ENCODE measurements at regions of chr12 and their contacts with region 1.

Region 1: GRCh38 chr12:55829967-55830600 is 697 bp upstream of the DNAJC14 start:
- DNase-seq: peak; percentile 13
- H3K4me3 Mint-ChIP-seq: peak overlapping the region; percentile 97
- H3K27ac Mint-ChIP-seq: peak overlapping the region; percentile 92
- H3K4me1 Mint-ChIP-seq: peaks cover 28% of the 10 kb centered on the region
- H3K27me3 Mint-ChIP-seq: no peaks in the 10 kb centered on the region
- CTCF ChIP-seq: no peak

Region 2: GRCh38 chr12:55847603-55848291 is 17.7 kb after region 1 on chr12:
- CTCF ChIA-PET with region 1: interaction called, 5 read pairs
- POLR2A ChIA-PET with region 1: interaction called, 12 read pairs
- intact Hi-C with region 1: loop called (anchors 1 kb)
- DNase-seq: peak; percentile 97
- H3K4me3 Mint-ChIP-seq: peak overlapping the region; percentile 52
- H3K27ac Mint-ChIP-seq: peak overlapping the region; percentile 99
- H3K4me1 Mint-ChIP-seq: peaks cover 20% of the 10 kb centered on the region
- H3K27me3 Mint-ChIP-seq: no peaks in the 10 kb centered on the region
- CTCF ChIP-seq: no peak

Region 3: GRCh38 chr12:55875704-55876467 is 45.8 kb after region 1 on chr12:
- CTCF ChIA-PET with region 1: no interaction called
- POLR2A ChIA-PET with region 1: interaction called, 12 read pairs
- intact Hi-C with region 1: no loop called
- DNase-seq: no peak
- H3K4me3 Mint-ChIP-seq: no peak overlapping the region
- H3K27ac Mint-ChIP-seq: no peak overlapping the region
- H3K4me1 Mint-ChIP-seq: peaks cover 5% of the 10 kb centered on the region
- H3K27me3 Mint-ChIP-seq: no peaks in the 10 kb centered on the region
- CTCF ChIP-seq: no peak

Region 4: DNA sequence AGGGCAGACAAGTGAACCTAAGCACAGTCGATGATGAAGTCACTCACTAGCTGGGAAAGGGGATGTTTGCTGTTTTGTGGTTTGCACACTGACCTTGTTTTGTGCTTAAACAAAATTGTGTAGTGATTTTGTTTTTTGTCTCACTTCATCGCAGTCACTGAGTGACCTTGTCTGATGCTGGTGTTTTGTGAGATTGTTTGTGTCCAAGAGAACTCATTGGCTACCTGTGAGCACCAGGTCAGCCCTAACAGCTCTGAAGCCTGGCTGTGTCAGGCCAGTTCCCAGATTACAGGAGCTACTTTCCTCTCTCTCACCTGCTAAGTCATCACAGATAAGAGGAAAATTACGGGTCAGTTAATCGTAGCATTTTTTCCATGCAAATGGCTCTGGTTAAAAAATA is 294.0 kb after region 1 on chr12:
- CTCF ChIA-PET with region 1: no interaction called
- POLR2A ChIA-PET with region 1: no interaction called
- intact Hi-C with region 1: no loop called
- DNase-seq: no peak
- H3K4me3 Mint-ChIP-seq: no peak overlapping the region
- H3K27ac Mint-ChIP-seq: no peak overlapping the region
- H3K4me1 Mint-ChIP-seq: peaks cover 26% of the 10 kb centered on the region
- H3K27me3 Mint-ChIP-seq: no peaks in the 10 kb centered on the region
- CTCF ChIP-seq: no peak

Measured in MCF 10A (cell line).